Transverse colon (tissue), 4 donors: ENCODE measurements at regions of chr19 and their contacts with region 1.

Region 1: GRCh38 chr19:11293433-11294389 is 2.2 kb upstream of the TSPAN16 start:
- DNase-seq: peak; percentile 93
- H3K4me3 ChIP-seq: peak overlapping the region in 2 of 4 donors; percentile 1 to 34
- H3K27ac ChIP-seq: peak overlapping the region; percentile 12 to 68 (median 43)
- H3K4me1 ChIP-seq: peaks cover 0 to 27% (median 19%) of the 10 kb centered on the region in 4 donors
- H3K27me3 ChIP-seq: peaks cover 1% of the 10 kb centered on the region
- CTCF ChIP-seq: peak; percentile 98 to 99 (median 99)
- EP300 ChIP-seq: no peak
- POLR2A ChIP-seq: no peak

Region 2: DNA sequence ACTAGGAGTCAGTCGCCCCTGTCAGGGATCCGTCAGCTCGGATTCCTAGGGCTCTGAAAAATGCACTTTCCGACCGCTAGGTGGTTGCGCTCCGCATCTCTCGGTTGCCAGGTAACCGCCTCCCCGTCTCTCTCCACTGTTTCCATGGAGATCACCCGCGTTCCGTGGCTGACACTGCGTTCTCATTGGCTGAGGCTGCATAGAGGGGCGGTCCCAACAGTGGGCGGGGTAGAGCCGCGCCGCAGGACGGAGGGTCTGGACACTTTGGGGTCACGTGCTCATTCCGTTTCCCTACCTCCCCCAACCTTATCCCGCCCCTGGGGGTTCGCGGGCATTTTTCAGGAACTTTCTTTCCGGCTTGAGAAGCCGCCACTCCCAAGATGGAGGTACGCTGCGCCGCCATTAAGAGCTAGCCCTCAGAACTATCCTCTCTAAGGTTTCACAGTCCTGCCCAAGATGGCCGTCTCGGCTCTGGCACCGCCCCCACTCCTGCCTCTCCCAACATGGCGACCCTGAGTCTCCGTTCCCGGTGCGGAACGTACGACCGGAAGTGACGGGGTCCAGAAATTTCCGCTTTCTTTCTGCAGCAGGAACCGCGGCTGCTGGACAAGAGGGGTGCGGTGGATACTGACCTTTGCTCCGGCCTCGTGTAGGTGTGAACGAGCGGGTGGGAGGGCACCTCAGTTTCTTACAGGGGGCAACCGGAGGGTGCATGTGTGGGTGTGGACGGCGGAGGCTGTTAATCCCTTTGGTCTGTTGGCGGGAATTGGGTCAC is 141.5 kb after region 1 on chr19 and contains the starts of genes ODAD3 and PRKCSH:
- in situ Hi-C with region 1: loop called in 1 of 4 experiments (anchors 10 kb)
- intact Hi-C with region 1: loop called (anchors 10 kb)
- DNase-seq: peak; percentile 99
- H3K4me3 ChIP-seq: peak within 1 kb of the TSS; percentile 58 to 77 (median 70)
- H3K27ac ChIP-seq: peak within 1 kb of the TSS; percentile 82 to 92 (median 86)
- H3K4me1 ChIP-seq: peaks cover 9 to 18% (median 15%) of the 10 kb centered on the region in 4 donors
- H3K27me3 ChIP-seq: no peaks in the 10 kb centered on the region
- CTCF ChIP-seq: peak; percentile 86 to 100 (median 91)
- EP300 ChIP-seq: no peak
- POLR2A ChIP-seq: peak; percentile 64
- total RNA-seq, gene ODAD3: 0.32 to 2.2 TPM in 2 of 4 donors, not detected in the others
- total RNA-seq, gene PRKCSH: 119 to 195 (median 183) TPM

Region 3: GRCh38 chr19:11446652-11447301 is 153.1 kb after region 1 on chr19:
- in situ Hi-C with region 1: loop called in 1 of 4 experiments (anchors 25 kb)
- intact Hi-C with region 1: loop called (anchors 10 kb)
- DNase-seq: peak; percentile 50
- H3K4me3 ChIP-seq: no peak overlapping the region
- H3K27ac ChIP-seq: no peak overlapping the region
- H3K4me1 ChIP-seq: peaks cover 0 to 3% (median 0%) of the 10 kb centered on the region in 4 donors
- H3K27me3 ChIP-seq: no peaks in the 10 kb centered on the region
- CTCF ChIP-seq: peak; percentile 70 to 88 (median 76)
- EP300 ChIP-seq: no peak
- POLR2A ChIP-seq: no peak

Region 4: GRCh38 chr19:11453468-11454341 is 160.0 kb after region 1 on chr19:
- in situ Hi-C with region 1: loop called in 1 of 4 experiments (anchors 25 kb)
- intact Hi-C with region 1: loop called (anchors 10 kb)
- DNase-seq: no peak
- H3K4me3 ChIP-seq: no peak overlapping the region
- H3K27ac ChIP-seq: no peak overlapping the region
- H3K4me1 ChIP-seq: peaks cover 0 to 3% (median 0%) of the 10 kb centered on the region in 4 donors
- H3K27me3 ChIP-seq: peaks cover 22% of the 10 kb centered on the region
- CTCF ChIP-seq: peak in 1 of 5 experiments; percentile 12
- EP300 ChIP-seq: no peak
- POLR2A ChIP-seq: no peak

Region 5: DNA sequence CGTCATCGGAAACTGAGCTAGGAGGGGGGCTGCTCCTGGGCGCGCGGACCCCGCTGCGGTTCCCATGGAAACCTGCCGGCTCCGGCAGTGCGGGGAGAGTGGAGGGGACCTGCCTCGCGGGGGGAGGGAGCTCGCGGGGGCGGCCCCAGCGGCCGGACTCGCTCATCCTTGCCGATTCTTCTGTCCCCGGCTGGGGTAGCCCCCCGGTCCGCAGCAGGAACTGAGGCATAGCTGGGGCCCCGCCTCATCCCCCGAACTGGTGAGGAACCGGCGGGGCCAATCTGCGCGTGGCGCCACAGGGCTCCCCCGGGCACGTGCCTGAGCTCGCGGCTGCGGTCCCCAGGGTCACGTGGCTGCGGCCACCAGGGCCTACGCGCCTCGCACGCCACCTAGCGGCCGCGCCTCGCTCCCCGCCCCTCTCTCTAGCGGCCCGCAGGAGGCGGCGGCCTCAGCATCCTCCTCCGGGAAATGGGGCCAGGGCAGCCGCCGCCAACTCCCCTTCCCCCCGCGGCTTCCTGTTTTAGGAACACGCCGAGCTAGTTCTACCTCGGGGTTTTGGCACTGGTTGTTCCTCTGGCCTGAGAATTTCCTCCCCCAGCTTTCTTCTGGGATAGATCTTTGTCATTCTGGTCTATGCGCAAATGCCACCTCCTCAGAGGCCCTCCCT is 188.8 kb after region 1 on chr19:
- in situ Hi-C with region 1: loop called in 2 of 4 experiments (anchors 10 to 25 kb)
- intact Hi-C with region 1: no loop called
- DNase-seq: peak; percentile 87
- H3K4me3 ChIP-seq: peak overlapping the region in 2 of 4 donors; percentile 9 to 40
- H3K27ac ChIP-seq: no peak overlapping the region
- H3K4me1 ChIP-seq: peaks cover 7 to 32% (median 26%) of the 10 kb centered on the region in 4 donors
- H3K27me3 ChIP-seq: peaks cover 56% of the 10 kb centered on the region
- CTCF ChIP-seq: peak; percentile 87 to 96 (median 94)
- EP300 ChIP-seq: no peak
- POLR2A ChIP-seq: no peak

Region 6: DNA sequence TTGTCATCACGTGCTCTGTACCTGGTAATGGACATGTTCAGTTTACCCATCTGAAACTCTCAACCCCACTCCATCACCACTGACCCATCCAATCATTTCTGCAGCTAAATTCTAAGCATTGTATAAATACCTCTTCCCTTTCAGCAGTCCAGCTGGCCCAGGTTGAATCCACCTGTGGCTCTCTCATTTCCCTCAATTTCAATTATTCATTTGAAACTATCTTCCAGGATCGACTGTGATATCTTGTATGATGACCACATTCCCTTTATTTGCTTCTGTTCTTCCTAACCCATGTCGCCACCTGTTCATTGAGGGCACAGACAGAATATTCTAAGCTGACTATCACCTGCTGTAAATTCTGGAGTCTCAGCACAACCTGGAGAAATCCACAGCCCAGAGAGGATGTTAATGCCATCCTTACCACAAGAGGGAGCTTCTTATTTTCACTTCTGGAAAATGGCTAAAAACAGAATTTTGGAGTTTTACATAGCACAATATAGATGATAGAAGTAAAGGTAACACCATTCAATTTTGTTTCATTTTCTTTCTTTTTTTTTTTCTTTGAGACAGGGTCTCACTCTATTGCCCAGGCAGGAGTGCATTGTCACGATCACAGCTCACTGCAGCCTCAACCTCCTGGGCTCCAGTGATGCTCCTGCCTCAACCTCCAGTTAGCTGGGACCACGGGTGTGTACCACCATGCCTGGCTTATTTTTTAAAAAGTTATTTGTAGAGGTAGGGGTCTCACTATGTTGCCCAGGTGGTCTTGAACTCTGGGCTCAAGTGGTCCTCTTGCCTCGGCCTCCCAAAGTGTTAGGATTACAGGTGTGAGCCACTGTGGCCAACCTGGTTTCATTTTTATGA is 406.5 kb after region 1 on chr19:
- in situ Hi-C with region 1: no loop called
- intact Hi-C with region 1: no loop called
- DNase-seq: no peak
- H3K4me3 ChIP-seq: no peak overlapping the region
- H3K27ac ChIP-seq: no peak overlapping the region
- H3K4me1 ChIP-seq: peaks cover 0 to 1% (median 1%) of the 10 kb centered on the region in 4 donors
- H3K27me3 ChIP-seq: no peaks in the 10 kb centered on the region
- CTCF ChIP-seq: peak; percentile 63 to 73 (median 67)
- EP300 ChIP-seq: no peak
- POLR2A ChIP-seq: no peak